Dorsolateral prefrontal cortex (tissue), 120 donors: ENCODE measurements at regions of chr18 and their contacts with region 1.

Region 1: GRCh38 chr18:54444319-54444914 is 86.7 kb downstream of the C18orf54 start:
- DNase-seq: peak in 8 of 10 donors; percentile 7 to 65 (median 46)
- H3K4me3 ChIP-seq: no peak overlapping the region
- H3K27ac ChIP-seq: no peak overlapping the region
- H3K27me3 ChIP-seq: peaks cover 0 to 10% (median 0%) of the 10 kb centered on the region in 45 donors
- CTCF ChIP-seq: peak; percentile 31 to 85 (median 69)

Region 2: GRCh38 chr18:54671291-54671881 is 227.0 kb after region 1 on chr18:
- intact Hi-C with region 1: loop called (anchors 5 to 10 kb)
- DNase-seq: no peak
- H3K4me3 ChIP-seq: no peak overlapping the region
- H3K27ac ChIP-seq: no peak overlapping the region
- H3K27me3 ChIP-seq: peaks cover 0 to 4% (median 0%) of the 10 kb centered on the region in 45 donors
- CTCF ChIP-seq: peak; percentile 59 to 92 (median 77)

Region 3: GRCh38 chr18:54679318-54680149 is 235.1 kb after region 1 on chr18:
- intact Hi-C with region 1: loop called (anchors 5 to 10 kb)
- DNase-seq: no peak
- H3K4me3 ChIP-seq: no peak overlapping the region
- H3K27ac ChIP-seq: no peak overlapping the region
- H3K27me3 ChIP-seq: no peaks in the 10 kb centered on the region
- CTCF ChIP-seq: peak; percentile 12 to 84 (median 64)

Region 4: GRCh38 chr18:54983041-54983686 is 538.7 kb after region 1 on chr18:
- intact Hi-C with region 1: loop called in 1 of 2 experiments (anchors 10 kb)
- DNase-seq: no peak
- H3K4me3 ChIP-seq: no peak overlapping the region
- H3K27ac ChIP-seq: no peak overlapping the region
- H3K27me3 ChIP-seq: peaks cover 0 to 3% (median 0%) of the 10 kb centered on the region in 45 donors
- CTCF ChIP-seq: peak; percentile 59 to 94 (median 80)